ENCODE measurements at regions of chr3 and their contacts with region 1.

Region 1: GRCh38 chr3:113745273-113746068 is 578 bp downstream of the NAA50 start:
- DNase-seq: peak; percentile 82 to 92 (median 84)
- H3K4me3 ChIP-seq: peak overlapping the region; percentile 87 to 96
- H3K4me3 Mint-ChIP-seq: peak overlapping the region; percentile 92 to 100 (median 98)
- H3K27ac ChIP-seq: peak overlapping the region; percentile 99
- H3K27ac Mint-ChIP-seq: peak overlapping the region; percentile 100
- H3K4me1 ChIP-seq: peaks cover 73% of the 10 kb centered on the region
- H3K4me1 Mint-ChIP-seq: peaks cover 49 to 90% (median 62%) of the 10 kb centered on the region in 4 donors
- H3K27me3 ChIP-seq: no peaks in the 10 kb centered on the region
- H3K27me3 Mint-ChIP-seq: no peaks in the 10 kb centered on the region

Region 2: DNA sequence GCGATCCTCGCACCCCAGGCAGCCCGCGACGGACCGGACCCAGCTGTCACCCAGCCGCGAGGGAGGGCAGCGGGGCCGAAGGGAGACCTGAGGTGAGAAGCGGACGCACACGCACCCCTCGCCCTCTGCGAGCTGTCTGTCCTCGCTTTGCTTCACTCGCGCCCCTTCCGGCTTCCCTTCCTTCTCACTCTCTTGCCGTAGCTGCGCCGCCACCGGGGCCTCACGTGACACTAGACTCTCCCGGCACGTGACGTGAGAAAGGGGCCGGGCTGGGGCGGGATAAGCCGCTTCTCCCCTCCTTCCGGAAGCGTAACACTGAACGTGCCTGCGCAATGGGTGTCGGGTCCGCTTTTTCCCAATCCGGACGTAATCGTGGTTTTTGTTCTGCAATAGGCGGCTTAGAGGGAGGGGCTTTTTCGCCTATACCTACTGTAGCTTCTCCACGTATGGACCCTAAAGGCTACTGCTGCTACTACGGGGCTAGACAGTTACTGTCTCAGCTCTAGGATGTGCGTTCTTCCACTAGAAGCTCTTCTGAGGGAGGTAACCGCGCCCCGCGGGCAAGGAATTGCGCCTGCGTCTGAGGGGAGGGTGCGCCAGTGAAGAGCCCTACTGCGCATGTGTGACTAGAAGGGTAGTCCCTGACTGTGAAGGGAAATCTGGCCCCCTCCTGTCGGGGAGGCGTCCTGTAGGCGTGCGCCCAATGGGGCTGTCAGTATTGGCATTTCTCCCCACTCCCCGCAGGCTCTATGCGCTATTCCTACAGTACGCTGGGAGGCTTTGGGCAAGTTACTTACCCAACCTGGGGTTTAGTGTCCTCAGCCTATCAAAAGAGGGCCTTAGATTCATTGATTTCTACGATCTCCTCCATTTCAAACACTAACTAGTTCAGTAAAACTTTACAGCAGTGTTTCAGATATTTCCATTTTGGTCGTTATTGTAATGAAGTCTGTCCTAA is 1183.5 kb before region 1 on chr3 and contains the starts of genes ATG3 and SLC35A5:
- CTCF ChIA-PET with region 1: no interaction called
- POLR2A ChIA-PET with region 1: interaction called, 5 read pairs
- intact Hi-C with region 1: loop called (anchors 1 kb)
- DNase-seq: peak; percentile 99 to 100 (median 99)
- H3K4me3 ChIP-seq: peak within 1 kb of the TSS; percentile 81 to 92
- H3K4me3 Mint-ChIP-seq: peak within 1 kb of the TSS; percentile 96 to 99 (median 98)
- H3K27ac ChIP-seq: peak within 1 kb of the TSS; percentile 99
- H3K27ac Mint-ChIP-seq: peak within 1 kb of the TSS; percentile 97 to 100 (median 100)
- H3K4me1 ChIP-seq: peaks cover 44% of the 10 kb centered on the region
- H3K4me1 Mint-ChIP-seq: peaks cover 29 to 59% (median 47%) of the 10 kb centered on the region in 4 donors
- H3K27me3 ChIP-seq: no peaks in the 10 kb centered on the region
- H3K27me3 Mint-ChIP-seq: no peaks in the 10 kb centered on the region
- total RNA-seq, gene ATG3: 49.0 to 54.0 TPM
- total RNA-seq, gene SLC35A5: 25.5 to 26.6 TPM

Region 3: GRCh38 chr3:112894258-112894657 is 851.2 kb before region 1 on chr3:
- CTCF ChIA-PET with region 1: no interaction called
- POLR2A ChIA-PET with region 1: no interaction called
- intact Hi-C with region 1: no loop called
- DNase-seq: no peak
- H3K4me3 ChIP-seq: no peak overlapping the region
- H3K4me3 Mint-ChIP-seq: no peak overlapping the region
- H3K27ac ChIP-seq: no peak overlapping the region
- H3K27ac Mint-ChIP-seq: no peak overlapping the region
- H3K4me1 ChIP-seq: no peaks in the 10 kb centered on the region
- H3K4me1 Mint-ChIP-seq: no peaks in the 10 kb centered on the region
- H3K27me3 ChIP-seq: no peaks in the 10 kb centered on the region
- H3K27me3 Mint-ChIP-seq: no peaks in the 10 kb centered on the region

Region 4: GRCh38 chr3:113495035-113495434 is 250.4 kb before region 1 on chr3:
- CTCF ChIA-PET with region 1: interaction called, 49 read pairs
- POLR2A ChIA-PET with region 1: interaction called, 4 read pairs
- intact Hi-C with region 1: loop called (anchors 1 kb)
- DNase-seq: peak; percentile 38 to 46 (median 41)
- H3K4me3 ChIP-seq: no peak overlapping the region
- H3K4me3 Mint-ChIP-seq: no peak overlapping the region
- H3K27ac ChIP-seq: no peak overlapping the region
- H3K27ac Mint-ChIP-seq: peak overlapping the region in 1 of 7 donors; percentile 43
- H3K4me1 ChIP-seq: no peaks in the 10 kb centered on the region
- H3K4me1 Mint-ChIP-seq: peaks cover 0 to 4% (median 2%) of the 10 kb centered on the region in 4 donors
- H3K27me3 ChIP-seq: no peaks in the 10 kb centered on the region
- H3K27me3 Mint-ChIP-seq: no peaks in the 10 kb centered on the region

Region 5: GRCh38 chr3:113606539-113607218 is 138.8 kb before region 1 on chr3:
- CTCF ChIA-PET with region 1: interaction called, 3 read pairs
- POLR2A ChIA-PET with region 1: interaction called, 3 read pairs
- intact Hi-C with region 1: loop called (anchors 10 kb)
- DNase-seq: peak; percentile 40 to 57 (median 54)
- H3K4me3 ChIP-seq: no peak overlapping the region
- H3K4me3 Mint-ChIP-seq: peak overlapping the region in 7 of 8 donors; percentile 46 to 64 (median 53)
- H3K27ac ChIP-seq: no peak overlapping the region
- H3K27ac Mint-ChIP-seq: peak overlapping the region; percentile 33 to 86 (median 73)
- H3K4me1 ChIP-seq: peaks cover 25% of the 10 kb centered on the region
- H3K4me1 Mint-ChIP-seq: peaks cover 15 to 29% (median 21%) of the 10 kb centered on the region in 4 donors
- H3K27me3 ChIP-seq: no peaks in the 10 kb centered on the region
- H3K27me3 Mint-ChIP-seq: no peaks in the 10 kb centered on the region

Region 6: GRCh38 chr3:113771993-113772392 is 26.5 kb after region 1 on chr3:
- CTCF ChIA-PET with region 1: no interaction called
- POLR2A ChIA-PET with region 1: no interaction called
- intact Hi-C with region 1: no loop called
- DNase-seq: no peak
- H3K4me3 ChIP-seq: no peak overlapping the region
- H3K4me3 Mint-ChIP-seq: no peak overlapping the region
- H3K27ac ChIP-seq: no peak overlapping the region
- H3K27ac Mint-ChIP-seq: no peak overlapping the region
- H3K4me1 ChIP-seq: no peaks in the 10 kb centered on the region
- H3K4me1 Mint-ChIP-seq: peaks cover 11 to 17% (median 14%) of the 10 kb centered on the region in 4 donors
- H3K27me3 ChIP-seq: no peaks in the 10 kb centered on the region
- H3K27me3 Mint-ChIP-seq: no peaks in the 10 kb centered on the region

Region 7: GRCh38 chr3:113838631-113839209 is 93.2 kb after region 1 on chr3 and contains the start of gene GRAMD1C:
- CTCF ChIA-PET with region 1: interaction called, 5 read pairs
- POLR2A ChIA-PET with region 1: interaction called, 3 read pairs
- intact Hi-C with region 1: loop called (anchors 2 kb)
- DNase-seq: peak; percentile 81 to 84 (median 83)
- H3K4me3 ChIP-seq: peak within 1 kb of the TSS; percentile 32 to 68
- H3K4me3 Mint-ChIP-seq: peak within 1 kb of the TSS; percentile 71 to 84 (median 81)
- H3K27ac ChIP-seq: no peak within 1 kb of the TSS
- H3K27ac Mint-ChIP-seq: peak within 1 kb of the TSS in 4 of 7 donors; percentile 31 to 56 (median 38)
- H3K4me1 ChIP-seq: peaks cover 7% of the 10 kb centered on the region
- H3K4me1 Mint-ChIP-seq: peaks cover 0 to 6% (median 6%) of the 10 kb centered on the region in 4 donors
- H3K27me3 ChIP-seq: no peaks in the 10 kb centered on the region
- H3K27me3 Mint-ChIP-seq: peaks cover 0 to 1% of the 10 kb centered on the region in 2 donors
- total RNA-seq, gene GRAMD1C: 2.6 to 2.8 TPM

Region 8: DNA sequence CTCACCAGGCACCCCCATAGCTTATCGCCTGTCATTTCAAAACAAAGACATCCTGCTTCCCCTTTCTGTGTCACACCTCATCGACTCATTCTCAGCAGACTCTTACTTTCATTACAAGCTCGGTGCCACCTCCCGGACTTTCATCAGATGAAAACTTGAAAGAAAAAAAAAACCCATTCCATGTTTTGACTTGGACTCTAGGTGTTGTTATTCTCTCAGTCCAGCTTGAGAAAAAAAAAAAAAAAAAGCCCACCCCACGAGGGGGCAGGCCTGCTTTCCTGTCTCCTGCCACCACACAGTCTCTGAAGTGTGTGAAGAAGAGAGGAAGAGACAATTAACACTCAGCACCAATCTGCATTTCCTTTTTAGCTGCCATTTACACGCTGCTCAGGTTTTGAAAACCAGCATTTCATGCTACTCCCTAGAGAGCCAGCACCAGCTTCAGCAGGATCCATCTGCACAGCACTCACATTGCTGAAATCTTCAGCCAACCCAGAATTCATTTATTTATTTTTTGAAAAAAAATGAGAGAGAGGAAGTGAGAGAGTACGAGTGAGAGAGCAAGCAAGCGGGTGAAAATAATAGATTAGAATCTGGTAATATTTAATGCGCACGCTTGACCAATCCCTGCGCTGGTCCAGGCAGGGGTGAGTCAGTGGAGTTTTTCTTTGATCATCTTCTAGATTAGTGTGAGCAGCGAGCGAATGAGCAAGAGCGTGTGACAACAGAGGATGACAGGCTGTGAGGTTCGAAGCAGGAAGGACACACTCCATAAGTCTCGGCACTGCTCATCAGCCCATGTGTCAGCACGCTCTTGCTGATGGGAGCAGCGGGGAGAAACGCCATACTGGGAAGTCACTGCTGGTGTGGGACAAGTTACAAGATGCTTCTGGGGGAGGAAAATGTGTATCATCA is 468.4 kb after region 1 on chr3:
- CTCF ChIA-PET with region 1: no interaction called
- POLR2A ChIA-PET with region 1: interaction called, 15 read pairs
- intact Hi-C with region 1: loop called (anchors 2 kb)
- DNase-seq: peak; percentile 74 to 92 (median 79)
- H3K4me3 ChIP-seq: peak overlapping the region; percentile 26 to 58
- H3K4me3 Mint-ChIP-seq: no peak overlapping the region
- H3K27ac ChIP-seq: peak overlapping the region; percentile 86
- H3K27ac Mint-ChIP-seq: no peak overlapping the region
- H3K4me1 ChIP-seq: peaks cover 71% of the 10 kb centered on the region
- H3K4me1 Mint-ChIP-seq: peaks cover 0 to 20% (median 7%) of the 10 kb centered on the region in 4 donors
- H3K27me3 ChIP-seq: no peaks in the 10 kb centered on the region
- H3K27me3 Mint-ChIP-seq: no peaks in the 10 kb centered on the region

Region 9: GRCh38 chr3:114884213-114884923 is 1138.9 kb after region 1 on chr3:
- CTCF ChIA-PET with region 1: no interaction called
- POLR2A ChIA-PET with region 1: no interaction called
- intact Hi-C with region 1: no loop called
- DNase-seq: no peak
- H3K4me3 ChIP-seq: no peak overlapping the region
- H3K4me3 Mint-ChIP-seq: no peak overlapping the region
- H3K27ac ChIP-seq: no peak overlapping the region
- H3K27ac Mint-ChIP-seq: no peak overlapping the region
- H3K4me1 ChIP-seq: no peaks in the 10 kb centered on the region
- H3K4me1 Mint-ChIP-seq: peaks cover 0 to 14% (median 11%) of the 10 kb centered on the region in 4 donors
- H3K27me3 ChIP-seq: no peaks in the 10 kb centered on the region
- H3K27me3 Mint-ChIP-seq: no peaks in the 10 kb centered on the region